Endothelial cell of umbilical vein (primary cell): ENCODE measurements at regions of chr1 and their contacts with region 1.

Region 1: GRCh38 chr1:212984522-212985291 is 31.0 kb downstream of the ANGEL2 start:
- DNase-seq: no peak
- H3K4me3 ChIP-seq: no peak overlapping the region
- H3K27ac ChIP-seq: no peak overlapping the region
- H3K4me1 ChIP-seq: no peaks in the 10 kb centered on the region
- H3K27me3 ChIP-seq: no peaks in the 10 kb centered on the region
- CTCF ChIP-seq: no peak
- POLR2A ChIP-seq: no peak

Region 2: DNA sequence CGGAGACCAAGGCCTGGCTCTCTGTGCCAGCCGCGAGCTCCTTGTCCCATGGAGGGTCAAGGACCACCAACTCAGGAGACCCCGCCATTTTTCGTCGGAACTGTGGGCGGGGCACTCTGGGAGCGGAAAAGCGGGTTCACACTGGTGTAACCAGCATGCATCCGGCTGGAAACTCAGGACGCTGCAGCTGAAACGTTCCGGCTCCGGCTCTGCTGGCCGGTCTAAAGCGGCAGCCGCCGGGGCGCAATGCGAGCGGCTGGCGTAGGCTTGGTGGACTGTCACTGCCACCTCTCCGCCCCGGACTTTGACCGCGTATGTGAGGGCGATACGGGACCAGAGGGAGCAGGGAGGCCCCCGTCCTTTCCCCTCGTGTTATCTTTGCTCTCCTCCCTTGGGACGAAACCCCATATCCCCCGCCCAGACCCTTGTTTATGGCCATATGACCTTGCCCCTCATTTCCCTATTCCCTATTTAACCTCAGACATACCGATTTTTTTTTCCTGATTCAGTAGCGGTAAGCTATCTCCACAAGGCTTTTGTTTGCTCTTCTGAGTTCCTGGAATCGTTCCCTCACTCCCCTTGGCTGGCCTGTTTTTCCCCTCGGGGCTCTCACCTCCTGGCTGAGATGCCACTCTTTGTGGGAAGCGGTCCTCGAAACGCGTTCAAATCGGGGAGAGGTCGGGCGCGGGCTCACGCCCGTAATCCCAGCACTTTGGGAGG is 192.9 kb before region 1 on chr1 and contains the starts of genes NSL1 and TATDN3:
- CTCF ChIA-PET with region 1: no interaction called
- POLR2A ChIA-PET with region 1: interaction called, 13 read pairs
- dilution Hi-C with region 1: no loop called
- intact Hi-C with region 1: no loop called
- DNase-seq: peak; percentile 95
- H3K4me3 ChIP-seq: peak within 1 kb of the TSS; percentile 77 to 97 (median 94)
- H3K27ac ChIP-seq: peak within 1 kb of the TSS; percentile 81
- H3K4me1 ChIP-seq: peaks cover 21% of the 10 kb centered on the region
- H3K27me3 ChIP-seq: no peaks in the 10 kb centered on the region
- CTCF ChIP-seq: no peak
- POLR2A ChIP-seq: peak; percentile 92
- total RNA-seq, gene NSL1: 27.7 and 30.2 TPM in 2 replicates
- total RNA-seq, gene TATDN3: 7.8 and 8.0 TPM in 2 replicates

Region 3: GRCh38 chr1:212857992-212858460 is 126.7 kb before region 1 on chr1 and contains the start of gene FLVCR1:
- CTCF ChIA-PET with region 1: no interaction called
- POLR2A ChIA-PET with region 1: no interaction called
- dilution Hi-C with region 1: no loop called
- intact Hi-C with region 1: no loop called
- DNase-seq: peak; percentile 94
- H3K4me3 ChIP-seq: peak within 1 kb of the TSS; percentile 10 to 88 (median 51)
- H3K27ac ChIP-seq: peak within 1 kb of the TSS; percentile 24
- H3K4me1 ChIP-seq: peaks cover 19% of the 10 kb centered on the region
- H3K27me3 ChIP-seq: no peaks in the 10 kb centered on the region
- CTCF ChIP-seq: no peak
- POLR2A ChIP-seq: peak; percentile 57
- total RNA-seq, gene FLVCR1: 11.9 and 12.0 TPM in 2 replicates